H1 (cell line): ENCODE measurements at regions of chr1 and their contacts with region 1.

Region 1: DNA sequence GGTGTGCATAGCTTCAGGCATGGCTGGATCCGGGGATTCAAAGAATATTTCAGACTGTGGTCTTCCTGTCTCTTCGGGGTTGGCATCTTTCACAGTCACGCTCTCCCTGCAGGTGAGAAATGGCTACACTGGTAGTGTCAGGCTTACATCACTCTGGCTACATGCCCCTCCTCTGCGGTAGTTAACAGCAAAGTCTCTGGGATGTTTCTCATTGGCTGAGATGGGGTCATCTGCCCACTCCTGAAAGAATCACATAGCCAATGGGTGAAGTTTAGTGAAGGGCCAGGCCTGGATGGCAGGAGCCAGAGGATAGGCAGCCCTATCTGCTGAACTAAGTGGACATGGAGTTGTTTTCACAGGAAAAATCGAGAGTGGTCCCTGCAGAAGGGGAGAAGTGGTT is 356.5 kb downstream of the MATN1 start:
- DNase-seq: peak in 1 of 2 experiments; percentile 45
- H3K4me3 ChIP-seq: no peak overlapping the region
- H3K27ac ChIP-seq: no peak overlapping the region
- H3K4me1 ChIP-seq: peaks cover 0 to 3% (median 0%) of the 10 kb centered on the region in 4 experiments; a peak in 2 of 7 replicates
- H3K27me3 ChIP-seq: no peaks in the 10 kb centered on the region; a peak in 1 of 7 replicates
- CTCF ChIP-seq: no peak
- EP300 ChIP-seq: no peak
- POLR2A ChIP-seq: no peak
- RAD21 ChIP-seq: no peak

Region 2: GRCh38 chr1:30302858-30303786 is 63.8 kb before region 1 on chr1:
- CTCF ChIA-PET with region 1: no interaction called
- POLR2A ChIA-PET with region 1: no interaction called
- DNase-seq: peak in 1 of 2 experiments; percentile 14
- H3K4me3 ChIP-seq: no peak overlapping the region
- H3K27ac ChIP-seq: no peak overlapping the region
- H3K4me1 ChIP-seq: no peaks in the 10 kb centered on the region
- H3K27me3 ChIP-seq: no peaks in the 10 kb centered on the region
- CTCF ChIP-seq: no peak
- EP300 ChIP-seq: no peak
- POLR2A ChIP-seq: no peak
- RAD21 ChIP-seq: no peak

Region 3: DNA sequence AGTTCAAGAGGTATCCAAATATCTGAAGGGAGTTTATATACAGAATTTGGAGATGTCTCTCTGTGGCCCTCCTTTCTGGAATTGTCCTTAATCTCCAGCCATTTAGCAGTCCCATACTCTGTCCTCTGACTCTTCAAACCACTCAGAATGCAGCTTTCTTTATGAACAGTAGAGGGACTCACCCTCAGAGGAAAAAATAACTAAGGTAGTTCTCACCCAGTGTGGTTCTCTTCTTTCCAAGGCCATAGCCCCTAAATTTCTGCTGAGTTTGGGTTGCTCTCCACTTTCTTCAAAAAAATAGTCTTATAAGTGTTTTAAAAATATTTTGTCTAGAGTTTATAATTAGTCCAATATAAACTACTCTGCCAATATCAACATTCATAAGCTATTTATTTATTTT is 13.3 kb before region 1 on chr1:
- CTCF ChIA-PET with region 1: interaction called, 17 read pairs
- POLR2A ChIA-PET with region 1: interaction called, 3 read pairs
- DNase-seq: no peak
- H3K4me3 ChIP-seq: no peak overlapping the region
- H3K27ac ChIP-seq: no peak overlapping the region
- H3K4me1 ChIP-seq: peaks cover 0 to 5% (median under 1%) of the 10 kb centered on the region in 4 experiments; a peak in 3 of 7 replicates
- H3K27me3 ChIP-seq: no peaks in the 10 kb centered on the region; a peak in 1 of 7 replicates
- CTCF ChIP-seq: peak in 2 of 3 experiments; percentile 17 to 41; a peak in 2 of 4 replicates
- EP300 ChIP-seq: no peak
- POLR2A ChIP-seq: no peak
- RAD21 ChIP-seq: peak; percentile 40 to 49

Region 4: DNA sequence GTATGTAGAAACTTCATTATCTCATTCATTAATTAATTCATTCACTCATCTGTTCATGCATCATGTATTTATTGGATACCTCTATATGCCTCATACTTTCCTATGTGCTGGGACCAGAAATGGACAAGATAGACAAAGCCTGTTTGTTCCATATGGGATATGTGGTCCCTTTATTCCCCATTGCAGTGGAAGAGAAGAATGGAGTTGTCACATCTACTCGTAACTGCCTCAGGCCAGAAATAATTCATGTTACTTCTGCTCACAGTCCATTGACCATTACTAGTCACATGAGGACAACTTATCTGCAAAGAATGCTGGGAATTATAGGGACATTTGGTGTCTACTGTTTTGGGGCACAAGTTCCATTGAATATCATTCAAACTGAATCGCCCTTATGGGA is 28.7 kb after region 1 on chr1:
- CTCF ChIA-PET with region 1: no interaction called
- POLR2A ChIA-PET with region 1: no interaction called
- DNase-seq: no peak
- H3K4me3 ChIP-seq: no peak overlapping the region
- H3K27ac ChIP-seq: no peak overlapping the region
- H3K4me1 ChIP-seq: no peaks in the 10 kb centered on the region
- H3K27me3 ChIP-seq: no peaks in the 10 kb centered on the region
- CTCF ChIP-seq: no peak
- EP300 ChIP-seq: no peak
- POLR2A ChIP-seq: no peak
- RAD21 ChIP-seq: no peak